CD8-positive, alpha-beta memory T cell (primary cell): ENCODE measurements at regions of chr7 and their contacts with region 1.

Region 1: GRCh38 chr7:65307651-65308299 is 65.9 kb upstream of the ZNF92 start:
- DNase-seq: peak; percentile 4 to 62 (median 42)
- H3K4me3 ChIP-seq: no peak overlapping the region
- H3K4me3 Mint-ChIP-seq: no peak overlapping the region
- H3K27ac ChIP-seq: no peak overlapping the region
- H3K27ac Mint-ChIP-seq: no peak overlapping the region
- H3K4me1 ChIP-seq: no peaks in the 10 kb centered on the region
- H3K4me1 Mint-ChIP-seq: peaks cover 1 to 5% (median 3%) of the 10 kb centered on the region in 3 donors
- H3K27me3 ChIP-seq: peaks cover 3% of the 10 kb centered on the region
- H3K27me3 Mint-ChIP-seq: peaks cover 7 to 27% of the 10 kb centered on the region in 2 donors

Region 2: GRCh38 chr7:64951250-64951848 is 356.4 kb before region 1 on chr7:
- CTCF ChIA-PET with region 1: interaction called, 27 read pairs
- POLR2A ChIA-PET with region 1: no interaction called
- DNase-seq: peak in 2 of 5 donors; percentile 34 to 35
- H3K4me3 ChIP-seq: no peak overlapping the region
- H3K4me3 Mint-ChIP-seq: no peak overlapping the region
- H3K27ac ChIP-seq: no peak overlapping the region
- H3K27ac Mint-ChIP-seq: no peak overlapping the region
- H3K4me1 ChIP-seq: no peaks in the 10 kb centered on the region
- H3K4me1 Mint-ChIP-seq: peaks cover 4% of the 10 kb centered on the region in 3 donors
- H3K27me3 ChIP-seq: peaks cover 12% of the 10 kb centered on the region
- H3K27me3 Mint-ChIP-seq: peaks cover 29 to 51% of the 10 kb centered on the region in 2 donors

Region 3: GRCh38 chr7:65216459-65216858 is 91.3 kb before region 1 on chr7:
- CTCF ChIA-PET with region 1: interaction called, 18 read pairs
- POLR2A ChIA-PET with region 1: no interaction called
- DNase-seq: peak; percentile 26 to 77 (median 64)
- H3K4me3 ChIP-seq: no peak overlapping the region
- H3K4me3 Mint-ChIP-seq: peak overlapping the region in 2 of 7 donors; percentile 14 to 54
- H3K27ac ChIP-seq: no peak overlapping the region
- H3K27ac Mint-ChIP-seq: peak overlapping the region in 1 of 8 donors; percentile 49
- H3K4me1 ChIP-seq: no peaks in the 10 kb centered on the region
- H3K4me1 Mint-ChIP-seq: peaks cover 0 to 6% (median 2%) of the 10 kb centered on the region in 3 donors
- H3K27me3 ChIP-seq: no peaks in the 10 kb centered on the region
- H3K27me3 Mint-ChIP-seq: peaks cover 0 to 3% of the 10 kb centered on the region in 2 donors